Astrocyte of the cerebellum (primary cell): ENCODE measurements at regions of chr13 and their contacts with region 1.

Region 1: GRCh38 chr13:99636728-99637353 is 135.6 kb downstream of the TM9SF2 start:
- DNase-seq: no peak
- H3K4me3 ChIP-seq: no peak overlapping the region
- CTCF ChIP-seq: no peak

Region 2: GRCh38 chr13:99548448-99548847 is 88.4 kb before region 1 on chr13:
- in situ Hi-C with region 1: no loop called
- DNase-seq: no peak
- H3K4me3 ChIP-seq: no peak overlapping the region
- CTCF ChIP-seq: no peak

Region 3: GRCh38 chr13:99577934-99578917 is 58.6 kb before region 1 on chr13:
- in situ Hi-C with region 1: no loop called
- DNase-seq: no peak
- H3K4me3 ChIP-seq: no peak overlapping the region
- CTCF ChIP-seq: peak; percentile 41

Region 4: DNA sequence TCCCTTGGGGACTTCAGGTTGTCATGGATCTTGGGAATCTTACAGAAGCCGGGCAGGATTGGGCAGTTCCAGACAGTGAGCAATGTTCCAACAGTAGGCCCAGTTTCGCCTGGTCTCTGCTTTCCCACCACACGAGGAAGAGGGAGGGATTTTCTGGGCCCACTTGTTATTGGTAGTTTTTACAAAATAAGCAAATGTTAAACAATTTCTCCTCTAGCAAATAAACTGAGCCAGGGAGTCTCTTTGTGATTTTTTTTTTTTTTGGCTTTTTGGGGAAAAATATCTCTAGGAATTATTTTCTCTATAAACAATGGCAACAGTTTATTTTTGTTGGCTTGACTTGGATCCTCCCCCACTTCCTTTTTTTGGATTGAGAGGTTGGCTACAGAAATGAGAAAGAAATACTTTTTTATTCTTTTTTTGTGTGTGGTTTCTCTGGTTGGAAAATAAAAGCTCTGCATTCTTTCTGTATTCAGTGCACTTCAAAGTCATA is 46.3 kb before region 1 on chr13:
- in situ Hi-C with region 1: loop called (anchors 5 kb)
- DNase-seq: peak; percentile 60
- H3K4me3 ChIP-seq: no peak overlapping the region
- CTCF ChIP-seq: no peak

Region 5: DNA sequence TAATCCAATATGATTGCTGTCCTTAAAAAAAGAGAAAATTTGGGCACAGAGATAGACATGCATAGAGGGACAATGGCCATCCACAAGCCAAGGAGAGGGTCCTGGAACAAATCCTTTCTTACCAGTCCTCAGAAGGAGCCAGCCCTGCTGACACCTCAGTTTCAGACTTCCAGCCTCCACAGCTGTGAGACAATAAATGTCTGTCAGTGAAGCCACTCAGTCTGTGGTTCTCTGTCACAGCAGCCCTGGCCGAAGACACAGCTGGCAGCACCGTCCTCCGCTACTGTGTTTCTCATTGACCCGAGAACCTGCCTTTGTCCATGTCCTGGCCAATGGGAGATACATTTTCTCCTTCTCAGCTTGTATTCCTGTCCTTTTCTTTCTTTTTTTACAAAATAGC is 72.3 kb after region 1 on chr13:
- in situ Hi-C with region 1: no loop called
- DNase-seq: no peak
- H3K4me3 ChIP-seq: no peak overlapping the region
- CTCF ChIP-seq: no peak

Region 6: DNA sequence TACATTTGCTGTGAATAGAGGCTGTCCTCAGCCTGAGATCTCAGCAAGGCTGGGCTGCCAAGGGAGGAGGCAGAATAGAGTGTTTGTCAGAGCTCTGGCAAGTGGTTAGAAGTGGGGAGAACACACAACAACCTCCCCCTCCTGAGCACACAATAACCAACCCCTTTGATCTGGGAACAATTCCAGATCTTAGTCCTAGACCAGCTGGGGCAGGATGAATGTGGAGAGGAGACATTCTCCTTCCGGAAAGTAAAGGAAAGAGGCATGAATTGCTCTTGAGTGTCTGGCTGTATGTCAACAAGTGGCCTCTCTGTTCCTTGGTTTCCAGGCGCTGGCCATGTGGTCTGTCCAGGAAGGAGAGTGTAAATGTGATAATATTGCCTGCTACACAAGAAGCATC is 1152.6 kb after region 1 on chr13:
- in situ Hi-C with region 1: no loop called
- DNase-seq: peak; percentile 9
- H3K4me3 ChIP-seq: no peak overlapping the region
- CTCF ChIP-seq: no peak